ENCODE measurements at regions of chr11 and their contacts with region 1.

Region 1: GRCh38 chr11:67401495-67402191 is at the start of gene PPP1CA:
- DNase-seq: peak; percentile 81 to 87
- ATAC-seq: peak; percentile 90 to 92
- H3K4me3 ChIP-seq: peak within 1 kb of the TSS; percentile 70 to 97 (median 80)
- H3K27ac ChIP-seq: peak within 1 kb of the TSS; percentile 87 to 96 (median 90)
- H3K4me1 ChIP-seq: peaks cover 20 to 22% of the 10 kb centered on the region in 2 donors
- H3K27me3 ChIP-seq: no peaks in the 10 kb centered on the region
- CTCF ChIP-seq: peak; percentile 33 to 93 (median 55)
- POLR2A ChIP-seq: peak; percentile 75 to 83
- total RNA-seq, gene PPP1CA: 78.4 to 193 (median 124) TPM

Region 2: GRCh38 chr11:67344264-67344663 is 57.4 kb before region 1 on chr11:
- in situ Hi-C with region 1: no loop called
- intact Hi-C with region 1: no loop called
- DNase-seq: no peak
- ATAC-seq: no peak
- H3K4me3 ChIP-seq: no peak overlapping the region
- H3K27ac ChIP-seq: no peak overlapping the region
- H3K4me1 ChIP-seq: no peaks in the 10 kb centered on the region
- H3K27me3 ChIP-seq: no peaks in the 10 kb centered on the region
- CTCF ChIP-seq: no peak
- POLR2A ChIP-seq: no peak

Region 3: DNA sequence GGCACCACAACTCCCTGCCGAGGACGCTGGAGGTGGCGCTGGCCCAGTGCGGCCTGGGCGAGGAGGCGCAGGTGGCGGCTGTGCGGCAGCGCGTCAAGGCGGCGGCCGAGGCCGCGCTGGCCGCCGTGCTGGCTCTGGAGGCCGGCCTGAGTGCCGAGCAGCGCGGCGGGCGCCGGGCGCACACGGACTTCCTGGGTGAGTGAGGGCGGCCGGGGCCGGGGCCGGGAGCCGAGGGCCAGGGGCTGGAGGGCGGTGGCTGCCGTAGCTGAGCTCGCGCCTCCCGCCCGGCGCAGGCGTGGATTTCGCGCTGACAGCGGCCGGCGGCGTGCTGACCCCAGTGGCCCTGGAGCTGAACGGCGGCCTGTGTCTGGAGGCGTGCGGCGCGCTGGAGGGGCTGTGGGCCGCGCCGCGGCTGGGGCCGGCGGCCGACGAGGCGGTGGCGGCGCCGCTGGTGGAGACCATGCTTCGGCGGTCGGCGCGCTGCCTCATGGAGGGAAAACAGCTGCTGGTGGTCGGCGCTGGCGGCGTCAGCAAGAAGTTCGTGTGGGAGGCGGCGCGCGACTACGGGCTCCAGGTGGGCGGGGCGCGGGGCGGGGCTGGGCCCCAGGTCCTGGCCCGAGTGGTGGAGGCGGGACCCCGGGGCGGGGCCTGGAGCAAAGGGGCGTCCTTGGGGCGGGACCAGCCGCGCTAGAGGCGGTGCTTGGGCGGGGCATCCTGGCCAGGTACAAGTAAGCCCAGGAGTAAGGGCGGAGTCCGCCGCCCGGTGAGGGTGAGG is 19.2 kb after region 1 on chr11:
- in situ Hi-C with region 1: no loop called
- intact Hi-C with region 1: loop called (anchors 1 kb)
- DNase-seq: peak; percentile 93 to 95
- ATAC-seq: peak; percentile 67 to 82
- H3K4me3 ChIP-seq: peak overlapping the region; percentile 21 to 77 (median 54)
- H3K27ac ChIP-seq: peak overlapping the region; percentile 78 to 97 (median 87)
- H3K4me1 ChIP-seq: peaks cover 45 to 50% of the 10 kb centered on the region in 2 donors
- H3K27me3 ChIP-seq: no peaks in the 10 kb centered on the region
- CTCF ChIP-seq: peak in 2 of 5 experiments; percentile 13 to 28
- POLR2A ChIP-seq: peak; percentile 86 to 90

Region 4: GRCh38 chr11:67482825-67483798 is 81.5 kb after region 1 on chr11 and contains the start of gene AIP:
- in situ Hi-C with region 1: loop called in 2 of 4 experiments (anchors 10 kb)
- intact Hi-C with region 1: loop called (anchors 1 kb)
- DNase-seq: peak; percentile 96 to 98
- ATAC-seq: peak; percentile 100
- H3K4me3 ChIP-seq: peak within 1 kb of the TSS; percentile 64 to 70 (median 66)
- H3K27ac ChIP-seq: peak within 1 kb of the TSS; percentile 83 to 90 (median 86)
- H3K4me1 ChIP-seq: peaks cover 9 to 14% of the 10 kb centered on the region in 2 donors
- H3K27me3 ChIP-seq: no peaks in the 10 kb centered on the region
- CTCF ChIP-seq: peak in 2 of 5 experiments; percentile 24 to 25
- POLR2A ChIP-seq: peak; percentile 24 to 53
- total RNA-seq, gene AIP: 33.0 to 60.8 (median 48.8) TPM